ENCODE measurements at regions of chr17 and their contacts with region 1.

Region 1: GRCh38 chr17:17568749-17569195 is 22.7 kb downstream of the PEMT start:
- DNase-seq: no peak
- H3K4me3 ChIP-seq: no peak overlapping the region
- H3K27me3 ChIP-seq: no peaks in the 10 kb centered on the region
- CTCF ChIP-seq: peak; percentile 84

Region 2: GRCh38 chr17:17356149-17356930 is 212.4 kb before region 1 on chr17:
- CTCF ChIA-PET with region 1: interaction called, 77 read pairs
- POLR2A ChIA-PET with region 1: no interaction called
- DNase-seq: no peak
- H3K4me3 ChIP-seq: no peak overlapping the region
- H3K27me3 ChIP-seq: no peaks in the 10 kb centered on the region; the same call in 1 of the 2 replicates
- CTCF ChIP-seq: peak; percentile 100

Region 3: GRCh38 chr17:17511881-17512858 is 56.6 kb before region 1 on chr17:
- CTCF ChIA-PET with region 1: interaction called, 23 read pairs
- POLR2A ChIA-PET with region 1: no interaction called
- DNase-seq: peak; percentile 76
- H3K4me3 ChIP-seq: no peak overlapping the region
- H3K27me3 ChIP-seq: no peaks in the 10 kb centered on the region
- CTCF ChIP-seq: no peak

Region 4: GRCh38 chr17:17557796-17558195 is 11.0 kb before region 1 on chr17:
- CTCF ChIA-PET with region 1: interaction called, 29 read pairs
- POLR2A ChIA-PET with region 1: no interaction called
- DNase-seq: no peak
- H3K4me3 ChIP-seq: no peak overlapping the region
- H3K27me3 ChIP-seq: no peaks in the 10 kb centered on the region
- CTCF ChIP-seq: no peak

Region 5: DNA sequence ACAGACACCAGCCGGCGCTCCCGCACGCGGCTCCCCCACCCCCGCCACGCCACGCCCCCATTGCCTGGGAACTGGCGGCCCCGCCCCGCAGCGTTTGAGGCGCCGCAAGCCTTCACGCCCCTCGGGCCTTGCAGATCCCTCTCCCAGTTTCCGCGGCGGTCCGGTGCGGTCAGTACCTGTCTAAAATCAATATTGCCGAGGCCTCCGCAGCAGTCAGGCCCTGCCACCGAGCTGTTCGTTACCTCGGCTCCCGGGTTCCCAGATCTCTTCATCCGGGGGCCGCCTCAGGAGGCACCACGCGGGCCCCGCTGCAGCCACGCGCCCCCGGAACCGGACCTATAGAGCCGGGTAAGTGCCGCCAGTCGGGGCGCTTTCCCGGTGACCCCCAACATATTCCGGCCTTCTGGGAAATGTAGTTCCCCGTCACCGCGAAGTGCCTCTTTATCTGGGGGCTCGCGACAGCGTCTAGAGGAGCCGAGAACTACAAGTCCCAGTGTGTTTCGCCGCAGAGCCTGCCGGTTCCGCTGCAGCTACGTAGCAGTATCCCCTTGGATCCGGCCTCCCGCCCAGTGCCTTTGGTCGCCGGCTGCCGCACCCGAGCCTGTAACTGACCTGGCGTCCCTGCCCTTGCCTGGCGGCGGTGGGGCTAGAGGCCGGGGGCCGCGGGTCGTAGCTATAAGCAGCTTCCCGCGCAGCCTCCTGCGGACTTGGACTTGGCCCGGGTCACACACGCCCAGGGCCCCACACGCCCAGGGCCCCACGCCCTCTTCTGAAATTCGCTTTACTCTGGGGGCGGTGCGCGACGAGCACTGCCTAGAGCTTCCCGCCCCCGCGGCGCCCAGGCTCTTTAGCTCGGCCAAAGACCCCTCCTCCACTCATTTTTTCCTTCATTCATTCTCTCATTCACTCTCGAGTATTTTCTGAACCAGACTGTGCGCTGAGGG is 22.9 kb after region 1 on chr17 and contains the start of gene PEMT:
- CTCF ChIA-PET with region 1: interaction called, 29 read pairs
- POLR2A ChIA-PET with region 1: interaction called, 3 read pairs
- DNase-seq: peak; percentile 92
- H3K4me3 ChIP-seq: peak within 1 kb of the TSS; percentile 69
- H3K27me3 ChIP-seq: no peaks in the 10 kb centered on the region
- CTCF ChIP-seq: no peak
- polyA plus RNA-seq, gene PEMT: 29.8 and 50.7 TPM in 2 replicates

Measured in BJ (cell line).